GM10248 (cell line): ENCODE measurements at regions of chr18 and their contacts with region 1.

Region 1: GRCh38 chr18:10519999-10520935 is 5.6 kb upstream of the NAPG start:
- DNase-seq: peak; percentile 71
- CTCF ChIP-seq: peak; percentile 70

Region 2: GRCh38 chr18:10482985-10483949 is 37.0 kb before region 1 on chr18:
- CTCF ChIA-PET with region 1: interaction called, 40 read pairs
- POLR2A ChIA-PET with region 1: no interaction called
- DNase-seq: peak; percentile 82
- CTCF ChIP-seq: no peak

Region 3: GRCh38 chr18:10490401-10491165 is 29.7 kb before region 1 on chr18:
- CTCF ChIA-PET with region 1: interaction called, 40 read pairs
- POLR2A ChIA-PET with region 1: no interaction called
- DNase-seq: peak; percentile 70
- CTCF ChIP-seq: peak; percentile 41

Region 4: GRCh38 chr18:10508591-10508990 is 11.7 kb before region 1 on chr18:
- CTCF ChIA-PET with region 1: interaction called, 19 read pairs
- POLR2A ChIA-PET with region 1: no interaction called
- DNase-seq: no peak
- CTCF ChIP-seq: no peak

Region 5: GRCh38 chr18:10566390-10566789 is 46.1 kb after region 1 on chr18:
- CTCF ChIA-PET with region 1: no interaction called
- POLR2A ChIA-PET with region 1: no interaction called
- DNase-seq: no peak
- CTCF ChIP-seq: no peak